ENCODE measurements at regions of chr18 and their contacts with region 1.

Region 1: GRCh38 chr18:11178951-11179549 is 29.7 kb upstream of the PIEZO2 start:
- DNase-seq: peak; percentile 71 to 92
- H3K4me3 ChIP-seq: no peak overlapping the region
- H3K27ac ChIP-seq: peak overlapping the region; percentile 82 to 90
- H3K4me1 ChIP-seq: peaks cover 3 to 39% of the 10 kb centered on the region in 2 donors
- H3K27me3 ChIP-seq: no peaks in the 10 kb centered on the region
- CTCF ChIP-seq: no peak

Region 2: GRCh38 chr18:11149441-11150270 is 29.4 kb before region 1 on chr18 and contains the start of gene PIEZO2:
- intact Hi-C with region 1: loop called (anchors 2 kb)
- DNase-seq: peak in 1 of 2 donors; percentile 82
- H3K4me3 ChIP-seq: peak within 1 kb of the TSS; percentile 57 to 84
- H3K27ac ChIP-seq: no peak within 1 kb of the TSS
- H3K4me1 ChIP-seq: peaks cover 10% of the 10 kb centered on the region in 2 donors
- H3K27me3 ChIP-seq: peaks cover 9% of the 10 kb centered on the region
- CTCF ChIP-seq: no peak
- total RNA-seq, gene PIEZO2: 3.1 TPM

Region 3: GRCh38 chr18:11215216-11215615 is 36.2 kb after region 1 on chr18:
- intact Hi-C with region 1: no loop called
- DNase-seq: no peak
- H3K4me3 ChIP-seq: no peak overlapping the region
- H3K27ac ChIP-seq: no peak overlapping the region
- H3K4me1 ChIP-seq: no peaks in the 10 kb centered on the region
- H3K27me3 ChIP-seq: no peaks in the 10 kb centered on the region
- CTCF ChIP-seq: no peak

Region 4: GRCh38 chr18:11324956-11325873 is 146.2 kb after region 1 on chr18:
- intact Hi-C with region 1: loop called (anchors 1 kb)
- DNase-seq: no peak
- H3K4me3 ChIP-seq: no peak overlapping the region
- H3K27ac ChIP-seq: peak overlapping the region in 1 of 2 donors; percentile 45
- H3K4me1 ChIP-seq: peaks cover 0 to 7% of the 10 kb centered on the region in 2 donors
- H3K27me3 ChIP-seq: no peaks in the 10 kb centered on the region
- CTCF ChIP-seq: no peak

Measured in ascending aorta (tissue), 2 donors.